Transverse colon (tissue), 4 donors: ENCODE measurements at regions of chr10 and their contacts with region 1.

Region 1: DNA sequence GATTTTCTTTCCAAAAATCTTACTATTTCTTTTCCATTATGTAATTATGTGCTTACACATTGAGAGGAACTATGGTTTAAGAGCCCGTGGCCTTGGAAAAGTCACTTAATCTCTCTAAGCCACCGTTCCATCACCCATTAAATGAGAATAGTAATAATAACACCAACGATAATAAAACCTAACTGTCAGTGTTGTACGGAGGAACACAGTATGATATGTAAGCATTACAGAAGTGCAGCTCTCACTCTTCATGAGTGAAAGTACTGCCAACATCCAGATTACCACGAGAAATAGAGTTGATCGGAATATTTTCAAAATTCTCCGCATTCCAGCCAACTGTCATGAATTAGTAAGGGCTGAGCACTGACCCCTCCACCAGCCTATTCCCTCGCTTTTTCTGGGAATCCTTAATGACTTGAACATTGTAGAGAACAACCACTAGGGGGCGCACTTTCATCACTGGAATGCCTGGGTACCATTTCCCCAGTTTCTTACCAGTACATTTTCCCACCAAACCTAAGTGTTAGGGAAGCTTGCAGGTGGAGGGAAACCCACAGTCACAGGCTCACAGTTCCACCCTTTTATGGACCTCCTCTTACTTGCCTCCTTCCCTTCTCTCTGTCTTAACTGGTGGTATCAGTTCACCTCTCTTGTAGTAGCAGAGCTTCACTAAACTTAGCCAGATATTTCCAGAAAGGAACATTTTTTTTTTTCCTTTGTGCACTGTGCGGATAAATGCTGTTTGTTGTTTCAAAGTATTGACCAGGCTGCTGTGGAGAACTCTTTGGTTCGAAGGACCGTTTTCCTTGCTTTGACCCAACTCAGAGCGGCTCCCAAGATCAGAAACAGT is 27.8 kb downstream of the NKX2-3 start:
- DNase-seq: peak; percentile 59
- H3K4me3 ChIP-seq: no peak overlapping the region
- H3K27ac ChIP-seq: no peak overlapping the region
- H3K4me1 ChIP-seq: peaks cover 0 to 3% (median 0%) of the 10 kb centered on the region in 4 donors
- H3K27me3 ChIP-seq: no peaks in the 10 kb centered on the region
- CTCF ChIP-seq: peak; percentile 80 to 83 (median 83)
- EP300 ChIP-seq: no peak
- POLR2A ChIP-seq: no peak

Region 2: GRCh38 chr10:99579616-99580370 is 19.3 kb after region 1 on chr10:
- in situ Hi-C with region 1: no loop called
- intact Hi-C with region 1: loop called (anchors 2 kb)
- DNase-seq: no peak
- H3K4me3 ChIP-seq: no peak overlapping the region
- H3K27ac ChIP-seq: no peak overlapping the region
- H3K4me1 ChIP-seq: no peaks in the 10 kb centered on the region
- H3K27me3 ChIP-seq: no peaks in the 10 kb centered on the region
- CTCF ChIP-seq: no peak
- EP300 ChIP-seq: no peak
- POLR2A ChIP-seq: no peak

Region 3: DNA sequence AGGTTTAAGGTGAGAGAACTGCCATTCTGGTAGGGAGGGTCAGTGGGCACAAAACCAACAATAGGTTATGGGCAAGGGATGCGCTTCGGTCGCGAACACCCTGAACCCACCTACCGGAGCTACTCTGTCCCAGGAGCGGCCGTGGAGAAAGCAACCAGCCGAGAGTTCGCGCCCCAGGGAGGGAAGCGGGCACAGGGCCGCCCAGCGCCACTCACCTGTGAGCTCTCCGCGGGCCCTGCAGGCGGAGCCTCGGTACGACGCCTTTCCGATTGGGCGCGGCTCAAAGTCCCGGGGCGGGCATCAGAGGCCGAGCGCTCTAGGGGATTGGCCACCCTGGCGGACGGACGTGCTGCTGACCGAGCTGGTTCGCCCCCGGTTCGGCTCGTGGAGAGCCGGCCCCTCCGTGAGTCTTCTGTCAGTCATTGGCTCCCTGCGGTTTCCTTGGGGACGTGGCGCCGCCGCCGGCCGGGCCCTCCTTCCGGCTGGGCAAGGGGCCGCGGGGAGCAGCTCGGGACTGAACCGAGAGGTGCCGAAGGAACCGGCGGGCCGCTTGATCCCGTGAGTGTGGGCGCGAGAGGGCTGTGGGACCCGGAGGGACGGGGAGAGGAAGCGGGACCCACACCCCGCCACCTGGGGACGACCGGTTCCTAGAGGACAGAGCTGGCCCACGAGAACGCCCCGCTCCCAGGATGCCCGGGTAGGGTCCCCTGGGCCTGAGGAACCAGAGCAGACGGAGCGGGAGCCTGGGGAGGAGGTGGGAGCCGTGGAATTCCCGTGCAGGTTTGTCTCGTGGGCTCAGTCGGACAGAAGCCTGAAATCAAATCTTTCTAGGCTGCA is 98.7 kb after region 1 on chr10 and contains the start of gene ENTPD7:
- in situ Hi-C with region 1: no loop called
- intact Hi-C with region 1: no loop called
- DNase-seq: peak; percentile 97
- H3K4me3 ChIP-seq: peak within 1 kb of the TSS; percentile 72 to 86 (median 84)
- H3K27ac ChIP-seq: peak within 1 kb of the TSS; percentile 57 to 81 (median 69)
- H3K4me1 ChIP-seq: peaks cover 0 to 30% (median 10%) of the 10 kb centered on the region in 4 donors
- H3K27me3 ChIP-seq: no peaks in the 10 kb centered on the region
- CTCF ChIP-seq: peak; percentile 36 to 78 (median 41)
- EP300 ChIP-seq: no peak
- POLR2A ChIP-seq: peak; percentile 53
- total RNA-seq, gene ENTPD7: 4.9 to 17.3 (median 8.0) TPM

Region 4: GRCh38 chr10:99700649-99701048 is 140.1 kb after region 1 on chr10:
- in situ Hi-C with region 1: no loop called
- intact Hi-C with region 1: loop called (anchors 5 kb)
- DNase-seq: no peak
- H3K4me3 ChIP-seq: no peak overlapping the region
- H3K27ac ChIP-seq: no peak overlapping the region
- H3K4me1 ChIP-seq: no peaks in the 10 kb centered on the region
- H3K27me3 ChIP-seq: no peaks in the 10 kb centered on the region
- CTCF ChIP-seq: no peak
- EP300 ChIP-seq: no peak
- POLR2A ChIP-seq: no peak